ENCODE measurements at regions of chrX and their contacts with region 1.

Region 1: GRCh38 chrX:11787564-11787963 is 29.5 kb downstream of the MSL3 start:
- DNase-seq: peak; percentile 34 to 67 (median 42)
- ATAC-seq: peak; percentile 91
- H3K4me3 ChIP-seq: no peak overlapping the region
- H3K27ac ChIP-seq: no peak overlapping the region
- H3K4me1 ChIP-seq: peaks cover 0 to 4% of the 10 kb centered on the region in 2 experiments; a peak in 1 of 5 replicates
- H3K27me3 ChIP-seq: no peaks in the 10 kb centered on the region
- CTCF ChIP-seq: peak; percentile 61 to 67 (median 62)
- EP300 ChIP-seq: no peak
- POLR2A ChIP-seq: no peak
- RAD21 ChIP-seq: peak; percentile 11 to 41; a peak in 1 of 4 replicates

Region 2: GRCh38 chrX:11908371-11908770 is 120.8 kb after region 1 on chrX:
- CTCF ChIA-PET with region 1: no interaction called
- POLR2A ChIA-PET with region 1: no interaction called
- in situ Hi-C with region 1: no loop called
- intact Hi-C with region 1: loop called (anchors 5 kb)
- DNase-seq: peak in 3 of 4 experiments; percentile 3 to 14 (median 9)
- ATAC-seq: peak; percentile 83
- H3K4me3 ChIP-seq: no peak overlapping the region
- H3K27ac ChIP-seq: no peak overlapping the region
- H3K4me1 ChIP-seq: no peaks in the 10 kb centered on the region
- H3K27me3 ChIP-seq: no peaks in the 10 kb centered on the region
- CTCF ChIP-seq: peak; percentile 32 to 42 (median 35); a peak in 4 of 6 replicates
- EP300 ChIP-seq: no peak
- POLR2A ChIP-seq: no peak
- RAD21 ChIP-seq: peak in 1 of 2 experiments; percentile 33; a peak in 1 of 4 replicates